ENCODE measurements at regions of chr9 and their contacts with region 1.

Region 1: DNA sequence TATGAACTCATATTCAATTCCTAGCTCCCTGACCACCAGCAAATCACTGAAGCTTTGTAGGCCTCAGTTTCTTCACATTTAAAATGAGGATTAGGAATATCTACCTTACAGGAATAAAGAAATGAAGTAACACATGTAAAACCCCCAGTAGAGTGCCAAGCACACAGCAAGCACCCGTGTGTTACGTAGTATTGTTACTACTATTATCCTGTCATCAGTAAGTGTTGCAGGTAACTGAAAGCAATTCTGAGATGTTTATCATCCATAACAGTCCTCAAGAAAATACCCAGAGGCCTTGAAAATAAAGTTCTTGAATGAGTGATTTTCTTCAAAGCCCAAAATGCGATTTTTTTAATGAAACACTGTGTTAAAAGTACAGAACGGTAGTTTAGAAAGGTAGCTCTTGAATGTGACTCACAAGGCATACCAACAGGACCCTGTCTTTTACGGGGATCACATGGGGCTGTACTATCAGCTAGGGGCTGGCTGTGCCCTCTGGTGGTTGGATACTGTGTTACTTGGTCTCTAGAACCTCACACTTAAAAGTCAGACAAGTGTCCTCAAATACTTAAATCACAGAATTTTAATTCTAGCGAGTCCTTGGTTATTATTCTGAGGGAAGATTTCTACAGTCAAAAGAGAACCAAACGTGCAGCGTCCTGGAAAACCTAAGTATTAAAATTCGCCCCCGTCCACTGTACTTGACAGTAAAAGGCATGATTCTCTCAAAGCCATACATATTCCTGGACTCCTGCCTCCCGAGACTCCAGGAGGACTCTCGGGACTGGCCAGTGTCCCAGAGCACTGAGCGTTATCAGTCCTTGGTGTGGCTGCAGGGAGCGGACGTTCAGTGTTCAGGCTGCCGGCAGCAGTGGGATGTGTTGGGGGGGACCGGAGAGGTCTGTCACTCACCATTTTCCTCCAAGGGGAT is 725 bp downstream of the NDUFB6 start:
- DNase-seq: peak; percentile 80
- H3K4me3 ChIP-seq: peak overlapping the region; percentile 76
- H3K27ac ChIP-seq: peak overlapping the region; percentile 97
- H3K4me1 ChIP-seq: peaks cover 9% of the 10 kb centered on the region
- H3K27me3 ChIP-seq: no peaks in the 10 kb centered on the region
- CTCF ChIP-seq: peak; percentile 67

Region 2: DNA sequence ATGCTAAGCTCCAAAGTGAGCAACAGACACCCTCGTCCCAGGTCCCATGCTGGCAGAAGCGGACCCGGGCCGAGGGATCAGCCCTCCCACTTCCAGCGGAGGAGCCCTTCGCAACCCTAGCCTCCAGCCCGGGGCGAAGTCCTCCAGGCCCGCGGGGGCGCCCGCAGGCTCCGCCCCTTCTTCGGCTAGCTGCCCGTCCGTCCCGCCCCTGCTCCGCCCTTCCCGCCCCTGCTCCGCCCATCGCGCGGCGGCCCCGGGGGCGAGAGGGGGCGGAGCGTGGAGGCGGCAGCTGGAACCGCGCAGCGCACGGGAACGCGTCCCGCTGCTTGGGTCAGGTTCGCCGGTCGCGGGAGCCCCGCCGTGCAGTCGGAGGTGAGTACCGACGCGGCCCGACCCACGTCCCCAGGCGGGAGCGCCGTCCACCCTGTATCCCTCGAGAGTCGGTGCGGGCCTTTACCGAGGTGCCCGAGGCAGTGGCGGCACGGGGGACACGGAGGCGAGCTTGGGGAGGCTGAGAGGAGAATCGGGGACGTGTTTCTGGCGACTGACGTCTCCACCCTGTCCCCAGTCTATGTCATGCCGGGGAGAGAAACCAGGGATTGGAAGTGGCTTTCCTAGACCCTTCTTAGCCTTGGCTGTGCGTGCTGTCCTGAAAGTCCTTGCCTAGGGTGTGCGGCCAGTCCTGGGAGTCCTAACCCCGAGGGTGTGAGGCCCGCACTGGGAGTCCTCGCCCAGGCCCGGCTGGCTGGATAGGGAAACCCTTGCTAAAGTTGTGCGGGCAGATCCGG is 187.7 kb before region 1 on chr9 and contains the start of gene ACO1:
- intact Hi-C with region 1: loop called (anchors 2 kb)
- DNase-seq: peak; percentile 93
- H3K4me3 ChIP-seq: peak within 1 kb of the TSS; percentile 89
- H3K27ac ChIP-seq: peak within 1 kb of the TSS; percentile 79
- H3K4me1 ChIP-seq: no peaks in the 10 kb centered on the region
- H3K27me3 ChIP-seq: no peaks in the 10 kb centered on the region
- CTCF ChIP-seq: no peak
- total RNA-seq, gene ACO1: 35.0 to 50.8 TPM

Region 3: GRCh38 chr9:32431940-32432555 is 140.2 kb before region 1 on chr9:
- intact Hi-C with region 1: loop called (anchors 5 kb)
- DNase-seq: peak; percentile 40
- H3K4me3 ChIP-seq: no peak overlapping the region
- H3K27ac ChIP-seq: no peak overlapping the region
- H3K4me1 ChIP-seq: no peaks in the 10 kb centered on the region
- H3K27me3 ChIP-seq: no peaks in the 10 kb centered on the region
- CTCF ChIP-seq: peak; percentile 46

Region 4: GRCh38 chr9:32526041-32526706 is 46.1 kb before region 1 on chr9 and contains the start of gene RIGI:
- intact Hi-C with region 1: loop called (anchors 10 kb)
- DNase-seq: peak; percentile 97
- H3K4me3 ChIP-seq: peak within 1 kb of the TSS; percentile 66
- H3K27ac ChIP-seq: peak within 1 kb of the TSS; percentile 93
- H3K4me1 ChIP-seq: peaks cover 3% of the 10 kb centered on the region
- H3K27me3 ChIP-seq: no peaks in the 10 kb centered on the region
- CTCF ChIP-seq: peak; percentile 45
- total RNA-seq, gene RIGI: 3.0 to 8.5 TPM